Pancreas (tissue), 10 donors: ENCODE measurements at regions of chr15 and their contacts with region 1.

Region 1: GRCh38 chr15:54082836-54083492 is 104.7 kb downstream of the UNC13C start:
- DNase-seq: peak in 2 of 6 donors; percentile 8 to 20
- ATAC-seq: peak in 2 of 4 donors; percentile 27 to 50
- H3K4me3 ChIP-seq: no peak overlapping the region
- H3K27ac ChIP-seq: no peak overlapping the region
- H3K4me1 ChIP-seq: no peaks in the 10 kb centered on the region
- H3K27me3 ChIP-seq: peaks cover 0 to 4% (median 0%) of the 10 kb centered on the region in 4 donors
- CTCF ChIP-seq: peak; percentile 32 to 55 (median 53)

Region 2: DNA sequence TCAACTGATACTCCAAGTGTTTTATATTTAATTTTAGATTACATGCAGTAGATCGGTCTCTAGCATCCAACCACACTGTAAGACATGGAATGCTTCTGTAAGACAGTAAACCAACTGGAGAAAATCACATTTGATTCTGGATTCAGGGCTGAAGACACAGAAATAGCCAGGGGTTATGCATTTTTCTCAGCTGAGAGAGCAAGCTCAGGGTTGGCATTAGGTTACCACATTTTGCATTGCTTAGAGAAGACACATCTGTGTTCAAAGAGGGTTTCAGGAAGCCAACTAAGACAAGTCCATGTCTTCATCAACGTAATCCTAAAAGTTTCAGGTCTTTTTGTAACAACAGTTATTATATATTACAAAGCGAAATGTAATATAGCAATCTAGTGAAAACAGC is 132.4 kb before region 1 on chr15:
- intact Hi-C with region 1: no loop called
- DNase-seq: no peak
- ATAC-seq: no peak
- H3K4me3 ChIP-seq: no peak overlapping the region
- H3K27ac ChIP-seq: no peak overlapping the region
- H3K4me1 ChIP-seq: no peaks in the 10 kb centered on the region
- H3K27me3 ChIP-seq: no peaks in the 10 kb centered on the region
- CTCF ChIP-seq: no peak

Region 3: DNA sequence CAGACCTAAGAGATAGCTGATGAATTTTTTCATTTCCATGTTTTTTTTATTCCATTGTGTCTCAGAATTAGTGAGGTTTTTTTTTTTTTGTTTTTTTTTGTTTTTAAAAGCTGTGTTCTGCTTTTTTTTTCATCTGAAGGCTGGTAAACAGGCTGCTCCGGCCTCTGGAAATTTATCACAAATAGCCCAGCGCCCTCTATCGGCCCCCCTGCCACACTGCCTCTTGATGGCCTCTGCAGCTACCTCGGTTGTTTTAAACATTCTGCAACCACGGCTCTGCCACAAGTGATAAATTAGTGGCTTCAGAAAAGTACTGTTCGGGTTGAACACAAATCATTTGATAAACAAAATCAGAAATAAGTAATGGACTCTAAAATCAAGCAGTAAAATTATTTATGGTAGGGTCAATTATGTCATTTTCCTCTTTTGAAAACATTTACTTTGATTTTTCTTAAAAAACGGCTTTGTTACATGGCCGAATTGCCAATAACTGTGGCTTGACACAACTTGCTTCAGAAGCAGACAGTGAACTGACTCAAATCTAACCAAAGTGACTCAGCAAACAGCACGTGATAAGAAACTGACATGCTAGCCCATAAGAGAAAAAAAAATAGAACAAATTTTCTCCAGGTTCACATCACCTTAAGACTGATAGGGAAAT is 1026.0 kb after region 1 on chr15:
- intact Hi-C with region 1: loop called in 1 of 3 experiments (anchors 5 kb)
- DNase-seq: peak; percentile 21 to 82 (median 54)
- ATAC-seq: peak in 3 of 4 donors; percentile 76 to 88 (median 81)
- H3K4me3 ChIP-seq: no peak overlapping the region
- H3K27ac ChIP-seq: no peak overlapping the region
- H3K4me1 ChIP-seq: no peaks in the 10 kb centered on the region
- H3K27me3 ChIP-seq: no peaks in the 10 kb centered on the region
- CTCF ChIP-seq: peak; percentile 14 to 64 (median 50)